ENCODE measurements at regions of chr21 and their contacts with region 1.

Region 1: DNA sequence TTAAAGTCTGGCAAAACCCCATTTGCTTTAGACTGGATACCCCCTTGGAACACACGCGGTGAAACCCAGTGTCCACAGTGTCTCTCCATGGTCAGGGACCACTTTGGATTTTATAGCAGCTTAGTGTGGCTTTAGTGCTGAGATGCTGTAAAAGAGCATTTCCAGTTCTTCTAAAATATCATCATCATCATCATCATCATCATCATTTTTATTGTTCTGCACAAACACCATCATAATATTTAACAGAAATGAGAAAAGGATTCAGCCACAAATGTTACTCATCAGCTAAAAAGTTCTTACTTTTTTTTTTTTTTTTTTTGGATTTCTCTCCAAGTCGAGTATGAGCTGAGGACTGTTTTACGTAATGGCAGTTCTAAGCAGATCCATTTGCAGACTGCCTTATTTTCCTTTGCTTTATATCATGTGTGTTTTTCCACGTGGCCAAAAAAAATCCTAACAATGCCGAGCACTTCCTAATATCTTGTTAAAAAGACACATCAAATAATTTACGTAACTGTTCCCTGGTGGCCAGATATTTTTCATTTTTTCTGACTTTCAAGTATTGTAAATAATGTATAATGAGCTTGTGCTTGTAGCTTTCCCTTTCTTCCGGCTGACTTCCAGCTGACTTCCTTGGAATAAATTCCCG is 62.8 kb downstream of the EVA1C start:
- DNase-seq: no peak
- ATAC-seq: peak in 4 of 8 donors; percentile 23 to 39 (median 28)
- H3K4me3 ChIP-seq: no peak overlapping the region
- H3K27ac ChIP-seq: peak overlapping the region in 2 of 10 donors; percentile 2 to 9
- H3K4me1 ChIP-seq: peaks cover 5 to 22% (median 16%) of the 10 kb centered on the region in 9 donors
- H3K27me3 ChIP-seq: no peaks in the 10 kb centered on the region
- CTCF ChIP-seq: no peak

Region 2: GRCh38 chr21:32285476-32285875 is 189.8 kb before region 1 on chr21:
- intact Hi-C with region 1: loop called in 1 of 10 experiments (anchors 5 kb)
- DNase-seq: no peak
- ATAC-seq: no peak
- H3K4me3 ChIP-seq: no peak overlapping the region
- H3K27ac ChIP-seq: no peak overlapping the region
- H3K4me1 ChIP-seq: no peaks in the 10 kb centered on the region
- H3K27me3 ChIP-seq: no peaks in the 10 kb centered on the region
- CTCF ChIP-seq: no peak

Measured in heart right ventricle (tissue), 16 donors.